Panc1 (cell line): ENCODE measurements at regions of chr16 and their contacts with region 1.

Region 1: GRCh38 chr16:11698271-11698689 is 30.0 kb downstream of the SNN start:
- DNase-seq: no peak
- ATAC-seq: no peak
- H3K4me3 ChIP-seq: no peak overlapping the region
- H3K27ac ChIP-seq: no peak overlapping the region
- H3K4me1 ChIP-seq: no peaks in the 10 kb centered on the region
- H3K27me3 ChIP-seq: no peaks in the 10 kb centered on the region
- CTCF ChIP-seq: no peak

Region 2: DNA sequence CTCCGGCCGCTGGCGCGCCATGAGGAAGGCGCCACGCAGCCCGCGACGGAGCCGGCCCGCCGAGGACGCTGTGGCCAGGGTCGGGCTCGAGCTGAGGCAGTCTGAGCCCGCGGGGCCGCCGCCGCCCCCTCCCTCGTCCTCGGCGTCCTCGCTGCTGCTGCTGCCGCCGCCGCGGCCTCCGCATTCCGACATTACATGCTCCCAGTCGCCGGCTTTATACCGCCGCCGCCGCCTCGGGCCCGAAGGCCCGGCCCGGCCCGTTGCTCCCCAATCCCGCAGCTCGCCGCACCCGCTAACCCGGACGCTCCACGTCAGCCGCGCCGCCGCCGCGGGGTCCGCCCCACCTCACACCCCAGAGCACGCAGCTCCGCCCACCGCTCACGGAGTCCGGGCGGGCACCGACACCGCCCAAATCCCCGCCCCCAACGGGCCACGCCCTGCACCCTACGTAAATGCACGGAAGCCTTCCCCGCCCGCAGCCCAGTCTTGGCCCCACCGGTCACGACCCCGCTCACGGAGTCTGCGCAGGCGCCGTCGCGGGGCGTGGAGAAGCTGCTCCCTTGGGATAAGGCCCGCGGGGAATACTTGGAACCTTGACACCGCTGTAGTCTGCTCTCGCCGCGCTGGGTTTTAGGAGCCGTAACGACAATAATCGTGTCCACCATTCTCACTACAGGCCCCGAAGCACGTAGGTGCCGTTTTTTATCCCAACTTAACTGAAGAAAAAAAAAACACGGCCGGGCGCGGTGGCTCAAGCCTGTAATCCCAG is 44.4 kb after region 1 on chr16 and contains the start of gene TXNDC11:
- CTCF ChIA-PET with region 1: no interaction called
- POLR2A ChIA-PET with region 1: interaction called, 10 read pairs
- in situ Hi-C with region 1: no loop called
- intact Hi-C with region 1: no loop called
- DNase-seq: peak; percentile 86
- ATAC-seq: peak; percentile 97
- H3K4me3 ChIP-seq: peak within 1 kb of the TSS; percentile 73 to 78
- H3K27ac ChIP-seq: peak within 1 kb of the TSS; percentile 93
- H3K4me1 ChIP-seq: peaks cover 18% of the 10 kb centered on the region
- H3K27me3 ChIP-seq: no peaks in the 10 kb centered on the region
- CTCF ChIP-seq: no peak
- total RNA-seq, gene TXNDC11: 30.5 TPM